Spleen (tissue), 13 donors: ENCODE measurements at regions of chr15 and their contacts with region 1.

Region 1: DNA sequence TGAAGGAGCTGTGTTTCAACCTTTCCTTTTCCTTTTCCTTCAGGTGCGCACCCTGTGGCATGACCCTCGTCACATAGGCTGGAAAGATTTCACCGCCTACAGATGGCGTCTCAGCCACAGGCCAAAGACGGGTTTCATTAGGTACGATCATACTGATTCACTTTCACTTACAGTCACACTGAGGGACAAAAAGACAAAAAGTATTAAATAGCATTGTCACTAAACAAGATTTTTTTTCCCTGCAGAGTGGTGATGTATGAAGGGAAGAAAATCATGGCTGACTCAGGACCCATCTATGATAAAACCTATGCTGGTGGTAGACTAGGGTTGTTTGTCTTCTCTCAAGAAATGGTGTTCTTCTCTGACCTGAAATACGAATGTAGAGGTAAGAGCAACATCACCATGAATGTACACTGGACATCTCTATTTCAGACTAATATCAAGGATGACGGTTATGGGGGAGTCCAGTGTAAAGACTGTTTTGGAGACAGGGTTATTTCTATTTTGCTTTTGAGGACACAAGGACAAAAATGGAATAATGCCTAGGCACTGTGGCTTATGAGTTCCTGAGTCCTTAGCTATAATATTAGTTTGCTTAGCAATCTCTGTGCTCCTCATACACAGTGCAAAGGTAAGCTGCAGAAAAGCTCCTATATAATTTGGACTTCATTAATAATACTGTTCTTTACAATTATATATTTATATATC is 13.3 kb downstream of the THBS1 start:
- DNase-seq: no peak
- H3K4me3 ChIP-seq: peak overlapping the region in 1 of 8 donors; percentile 3
- H3K27ac ChIP-seq: peak overlapping the region in 2 of 8 donors; percentile 1 to 4
- H3K4me1 ChIP-seq: peaks cover 0 to 13% (median 0%) of the 10 kb centered on the region in 6 donors
- H3K27me3 ChIP-seq: no peaks in the 10 kb centered on the region
- CTCF ChIP-seq: peak in 2 of 11 experiments; percentile 19 to 32
- POLR2A ChIP-seq: no peak

Region 2: DNA sequence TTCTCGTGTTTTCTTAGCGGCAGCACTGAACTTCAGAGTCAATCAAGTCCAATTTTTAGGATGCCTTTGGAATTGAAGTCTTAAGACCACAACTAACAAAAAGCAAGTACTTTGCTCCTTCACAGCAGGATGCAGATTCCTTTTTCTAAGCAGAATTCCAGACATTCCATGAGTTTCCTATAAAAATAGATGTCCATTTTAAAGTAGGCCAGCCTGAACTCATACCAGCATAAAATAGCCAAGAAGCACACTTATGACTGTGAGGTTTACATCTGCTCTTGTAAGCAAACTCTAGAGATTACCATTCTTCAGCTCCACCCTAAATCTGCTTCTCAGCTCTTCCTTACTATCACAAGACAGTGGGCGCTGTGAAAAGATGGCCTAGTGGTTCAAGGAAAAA is 72.5 kb after region 1 on chr15:
- intact Hi-C with region 1: loop called (anchors 10 kb)
- DNase-seq: no peak
- H3K4me3 ChIP-seq: no peak overlapping the region
- H3K27ac ChIP-seq: peak overlapping the region in 3 of 8 donors; percentile 0 to 44 (median 26)
- H3K4me1 ChIP-seq: peaks cover 0 to 14% (median 0%) of the 10 kb centered on the region in 6 donors
- H3K27me3 ChIP-seq: no peaks in the 10 kb centered on the region
- CTCF ChIP-seq: no peak
- POLR2A ChIP-seq: no peak